ENCODE measurements at regions of chr2 and their contacts with region 1.

Region 1: GRCh38 chr2:95121407-95122196 is at the start of gene MRPS5:
- DNase-seq: peak; percentile 96
- H3K4me3 ChIP-seq: peak within 1 kb of the TSS; percentile 77 to 96
- H3K27ac ChIP-seq: peak within 1 kb of the TSS; percentile 77 to 94
- H3K4me1 ChIP-seq: peaks cover 0 to 3% of the 10 kb centered on the region in 2 experiments; a peak in 1 of 4 replicates
- H3K27me3 ChIP-seq: no peaks in the 10 kb centered on the region
- CTCF ChIP-seq: peak; percentile 21; the same call in 1 of the 2 replicates
- EP300 ChIP-seq: 0 out of 4 replicates have a peak, but pooled peaks of 1 of the 2 experiments have one; percentile 26
- RAD21 ChIP-seq: no peak
- polyA plus RNA-seq, gene MRPS5: 32.8 and 40.4 TPM in 2 replicates

Region 2: GRCh38 chr2:95165129-95166064 is 43.8 kb after region 1 on chr2 and contains the start of gene ZNF2:
- CTCF ChIA-PET with region 1: interaction called, 4 read pairs
- POLR2A ChIA-PET with region 1: interaction called, 23 read pairs
- DNase-seq: peak; percentile 95
- H3K4me3 ChIP-seq: peak within 1 kb of the TSS; percentile 88 to 89
- H3K27ac ChIP-seq: peak within 1 kb of the TSS; percentile 85 to 96
- H3K4me1 ChIP-seq: peaks cover 0 to 15% of the 10 kb centered on the region in 2 experiments; a peak in 2 of 4 replicates
- H3K27me3 ChIP-seq: no peaks in the 10 kb centered on the region
- CTCF ChIP-seq: 0 out of 2 replicates have a peak, but pooled peaks have one; percentile 8
- EP300 ChIP-seq: no peak
- RAD21 ChIP-seq: no peak
- polyA plus RNA-seq, gene ZNF2: 1.6 and 2.3 TPM in 2 replicates